ENCODE measurements at regions of chr1 and their contacts with region 1.

Region 1: GRCh38 chr1:54671985-54672608 is 30.5 kb downstream of the MROH7 start:
- DNase-seq: peak; percentile 52 to 73
- H3K4me3 ChIP-seq: no peak overlapping the region
- H3K27ac ChIP-seq: no peak overlapping the region
- H3K4me1 ChIP-seq: no peaks in the 10 kb centered on the region
- H3K27me3 ChIP-seq: no peaks in the 10 kb centered on the region
- CTCF ChIP-seq: peak; percentile 94

Region 2: GRCh38 chr1:54070171-54070837 is 601.8 kb before region 1 on chr1:
- CTCF ChIA-PET with region 1: no interaction called
- POLR2A ChIA-PET with region 1: no interaction called
- intact Hi-C with region 1: loop called (anchors 10 kb)
- DNase-seq: peak in 1 of 2 experiments; percentile 55
- H3K4me3 ChIP-seq: no peak overlapping the region
- H3K27ac ChIP-seq: no peak overlapping the region
- H3K4me1 ChIP-seq: no peaks in the 10 kb centered on the region
- H3K27me3 ChIP-seq: no peaks in the 10 kb centered on the region
- CTCF ChIP-seq: peak; percentile 77

Region 3: GRCh38 chr1:54996359-54996868 is 324.3 kb after region 1 on chr1:
- CTCF ChIA-PET with region 1: no interaction called
- POLR2A ChIA-PET with region 1: no interaction called
- intact Hi-C with region 1: loop called (anchors 1 kb)
- DNase-seq: peak; percentile 39 to 81
- H3K4me3 ChIP-seq: peak overlapping the region; percentile 41; the same call in 1 of the 2 replicates
- H3K27ac ChIP-seq: no peak overlapping the region
- H3K4me1 ChIP-seq: 0 out of 2 replicates have a peak, but pooled peaks cover 4% of the 10 kb centered on the region
- H3K27me3 ChIP-seq: no peaks in the 10 kb centered on the region
- CTCF ChIP-seq: peak; percentile 95